Sigmoid colon (tissue), 7 donors: ENCODE measurements at regions of chr10 and their contacts with region 1.

Region 1: DNA sequence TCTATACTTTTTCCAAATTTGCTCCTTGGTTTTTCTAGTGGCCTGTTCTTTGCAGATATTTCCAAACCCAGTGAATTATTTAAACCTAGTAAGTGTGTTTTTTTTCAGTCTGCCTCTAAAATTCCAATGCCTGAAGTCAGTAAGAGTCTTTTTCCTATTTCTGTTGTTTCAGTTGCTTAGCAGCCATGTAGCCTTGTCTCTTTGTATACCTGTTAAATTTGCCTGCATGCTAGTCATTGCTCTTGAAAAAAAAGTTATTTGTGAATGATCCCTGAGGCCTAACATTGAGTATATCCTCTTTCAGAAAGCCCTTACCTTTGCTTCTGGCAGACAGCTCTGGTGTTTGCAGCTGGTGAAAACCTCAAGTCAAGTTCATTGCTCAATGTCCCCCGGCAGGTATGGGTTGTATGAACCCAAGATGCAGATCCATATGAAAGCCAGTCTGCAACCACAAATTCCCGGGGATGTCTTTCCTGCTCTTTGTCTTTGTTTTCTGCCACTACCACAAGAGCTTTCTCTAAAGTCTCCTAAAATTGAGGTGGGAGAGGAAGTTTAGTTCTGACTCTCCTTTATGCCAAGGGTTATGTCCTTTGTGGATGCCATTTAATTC is 35.7 kb downstream of the CH25H start:
- DNase-seq: no peak
- H3K4me3 ChIP-seq: no peak overlapping the region
- H3K27ac ChIP-seq: no peak overlapping the region
- H3K4me1 ChIP-seq: no peaks in the 10 kb centered on the region
- H3K27me3 ChIP-seq: no peaks in the 10 kb centered on the region
- CTCF ChIP-seq: no peak
- EP300 ChIP-seq: no peak
- POLR2A ChIP-seq: no peak

Region 2: GRCh38 chr10:89090756-89091445 is 80.5 kb before region 1 on chr10:
- intact Hi-C with region 1: loop called (anchors 10 kb)
- DNase-seq: no peak
- H3K4me3 ChIP-seq: no peak overlapping the region
- H3K27ac ChIP-seq: no peak overlapping the region
- H3K4me1 ChIP-seq: peaks cover 0 to 13% (median 3%) of the 10 kb centered on the region in 4 donors
- H3K27me3 ChIP-seq: no peaks in the 10 kb centered on the region
- CTCF ChIP-seq: no peak
- EP300 ChIP-seq: no peak
- POLR2A ChIP-seq: no peak

Region 3: GRCh38 chr10:89829262-89829886 is 658.0 kb after region 1 on chr10:
- intact Hi-C with region 1: no loop called
- DNase-seq: no peak
- H3K4me3 ChIP-seq: no peak overlapping the region
- H3K27ac ChIP-seq: no peak overlapping the region
- H3K4me1 ChIP-seq: no peaks in the 10 kb centered on the region
- H3K27me3 ChIP-seq: no peaks in the 10 kb centered on the region
- CTCF ChIP-seq: no peak
- EP300 ChIP-seq: no peak
- POLR2A ChIP-seq: no peak